ENCODE measurements at regions of chr3 and their contacts with region 1.

Region 1: GRCh38 chr3:195587824-195588223 is 4.1 kb upstream of the APOD start:
- DNase-seq: no peak
- ATAC-seq: peak; percentile 24
- H3K4me3 Mint-ChIP-seq: no peak overlapping the region
- H3K27ac Mint-ChIP-seq: no peak overlapping the region
- H3K4me1 Mint-ChIP-seq: peaks cover 4% of the 10 kb centered on the region
- H3K27me3 Mint-ChIP-seq: peaks cover 5% of the 10 kb centered on the region

Region 2: GRCh38 chr3:195416795-195417194 is 171.0 kb before region 1 on chr3:
- CTCF ChIA-PET with region 1: no interaction called
- POLR2A ChIA-PET with region 1: no interaction called
- intact Hi-C with region 1: no loop called
- DNase-seq: no peak
- ATAC-seq: no peak
- H3K4me3 Mint-ChIP-seq: no peak overlapping the region
- H3K27ac Mint-ChIP-seq: no peak overlapping the region
- H3K4me1 Mint-ChIP-seq: peaks cover 37% of the 10 kb centered on the region
- H3K27me3 Mint-ChIP-seq: no peaks in the 10 kb centered on the region

Region 3: GRCh38 chr3:195549931-195550519 is 37.8 kb before region 1 on chr3:
- CTCF ChIA-PET with region 1: interaction called, 4 read pairs
- POLR2A ChIA-PET with region 1: no interaction called
- intact Hi-C with region 1: loop called in 1 of 2 experiments (anchors 2 kb)
- DNase-seq: peak; percentile 83
- ATAC-seq: peak; percentile 59
- H3K4me3 Mint-ChIP-seq: peak overlapping the region; percentile 40
- H3K27ac Mint-ChIP-seq: peak overlapping the region; percentile 86
- H3K4me1 Mint-ChIP-seq: peaks cover 86% of the 10 kb centered on the region
- H3K27me3 Mint-ChIP-seq: no peaks in the 10 kb centered on the region

Measured in activated CD4-positive, alpha-beta T cell treated with anti-CD3 and anti-CD28 coated beads for 36 hours (primary cell).